Endothelial cell of umbilical vein (primary cell): ENCODE measurements at regions of chr10 and their contacts with region 1.

Region 1: DNA sequence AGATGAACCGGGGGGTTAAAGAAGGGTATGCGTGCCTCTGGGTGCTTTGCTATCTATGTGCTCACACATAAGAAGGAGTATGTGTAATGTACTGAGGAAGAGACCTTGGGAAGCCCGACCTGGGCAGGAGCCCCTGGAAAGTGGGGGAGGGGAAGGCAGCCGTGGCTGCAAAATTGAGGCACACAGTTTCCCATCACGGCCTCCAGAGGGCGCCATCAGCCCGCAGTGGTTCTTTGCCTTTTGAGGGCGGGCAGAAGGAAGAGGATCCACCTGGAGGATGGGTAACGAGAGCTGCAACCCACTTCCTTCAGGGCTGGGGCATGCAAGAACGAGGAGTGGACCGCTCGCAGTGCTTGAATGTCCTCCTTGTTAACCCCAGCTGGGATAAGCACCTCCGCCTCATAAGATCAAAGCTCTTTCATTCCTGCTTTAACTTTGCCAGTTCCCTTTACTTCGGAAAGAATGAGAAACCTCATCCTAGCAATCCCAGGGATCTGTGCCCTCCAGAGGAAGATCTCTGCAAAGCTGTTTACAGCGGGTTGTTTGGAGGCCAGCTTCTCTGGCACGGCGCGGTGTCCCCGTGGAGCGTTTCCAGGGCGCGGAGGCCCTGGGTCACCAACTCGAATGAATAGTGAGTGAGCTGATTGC is 77.9 kb downstream of the PCGF5 start:
- DNase-seq: peak; percentile 83
- H3K4me3 ChIP-seq: peak overlapping the region; percentile 16 to 63 (median 33)
- H3K27ac ChIP-seq: no peak overlapping the region
- H3K4me1 ChIP-seq: peaks cover 2% of the 10 kb centered on the region
- H3K27me3 ChIP-seq: no peaks in the 10 kb centered on the region
- CTCF ChIP-seq: peak; percentile 90 to 97
- POLR2A ChIP-seq: peak; percentile 25

Region 2: GRCh38 chr10:90885176-90885575 is 413.2 kb before region 1 on chr10:
- CTCF ChIA-PET with region 1: interaction called, 20 read pairs
- POLR2A ChIA-PET with region 1: no interaction called
- dilution Hi-C with region 1: no loop called
- intact Hi-C with region 1: loop called (anchors 1 kb)
- DNase-seq: no peak
- H3K4me3 ChIP-seq: no peak overlapping the region
- H3K27ac ChIP-seq: no peak overlapping the region
- H3K4me1 ChIP-seq: no peaks in the 10 kb centered on the region
- H3K27me3 ChIP-seq: no peaks in the 10 kb centered on the region
- CTCF ChIP-seq: no peak
- POLR2A ChIP-seq: no peak

Region 3: GRCh38 chr10:91311601-91312381 is 13.4 kb after region 1 on chr10:
- CTCF ChIA-PET with region 1: interaction called, 30 read pairs
- POLR2A ChIA-PET with region 1: no interaction called
- dilution Hi-C with region 1: no loop called
- intact Hi-C with region 1: no loop called
- DNase-seq: no peak
- H3K4me3 ChIP-seq: no peak overlapping the region
- H3K27ac ChIP-seq: no peak overlapping the region
- H3K4me1 ChIP-seq: no peaks in the 10 kb centered on the region
- H3K27me3 ChIP-seq: peaks cover 7 to 8% of the 10 kb centered on the region in 2 experiments
- CTCF ChIP-seq: no peak
- POLR2A ChIP-seq: no peak

Region 4: GRCh38 chr10:91367127-91367531 is 68.8 kb after region 1 on chr10:
- CTCF ChIA-PET with region 1: interaction called, 137 read pairs
- POLR2A ChIA-PET with region 1: no interaction called
- dilution Hi-C with region 1: no loop called
- intact Hi-C with region 1: loop called (anchors 1 kb)
- DNase-seq: no peak
- H3K4me3 ChIP-seq: no peak overlapping the region
- H3K27ac ChIP-seq: no peak overlapping the region
- H3K4me1 ChIP-seq: peaks cover 9% of the 10 kb centered on the region
- H3K27me3 ChIP-seq: no peaks in the 10 kb centered on the region
- CTCF ChIP-seq: no peak
- POLR2A ChIP-seq: no peak

Region 5: DNA sequence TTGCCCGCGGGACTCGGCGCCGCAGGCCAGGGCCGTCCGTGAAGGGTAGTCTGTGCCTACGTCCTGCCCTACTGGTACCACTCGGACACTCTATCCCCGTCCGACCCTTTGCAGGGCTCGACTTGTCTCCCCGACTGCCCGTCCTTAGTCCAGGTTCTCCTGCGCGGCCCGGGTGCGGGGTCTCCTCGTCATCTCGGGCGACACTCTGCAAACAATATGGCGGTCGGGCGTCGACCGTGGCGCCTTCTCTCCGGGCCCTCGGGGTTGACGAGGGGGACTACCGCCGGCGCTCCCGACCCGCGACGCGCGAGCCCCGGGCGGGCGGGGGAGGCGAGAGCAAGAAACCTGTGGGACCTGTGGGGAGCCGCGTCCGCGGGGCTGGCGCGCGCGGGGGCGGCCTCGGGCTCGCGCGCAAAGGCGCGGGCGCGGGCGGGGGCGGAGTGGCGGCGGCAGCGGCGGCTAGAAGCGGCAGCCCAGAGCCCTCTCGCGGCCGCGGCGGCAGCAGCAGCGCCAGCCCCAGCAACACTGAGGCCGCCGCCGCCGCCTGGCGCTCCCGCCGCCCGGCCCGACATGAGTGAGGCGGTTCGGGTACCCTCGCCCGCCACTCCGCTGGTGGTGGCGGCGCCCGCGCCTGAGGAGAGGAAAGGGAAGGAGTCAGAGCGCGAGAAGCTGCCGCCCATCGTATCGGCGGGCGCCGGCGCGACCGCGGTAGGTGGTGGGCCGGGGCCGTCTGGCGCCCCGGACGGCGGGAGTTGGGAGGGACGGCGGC is 111.7 kb after region 1 on chr10 and contains the start of gene HECTD2:
- CTCF ChIA-PET with region 1: interaction called, 18 read pairs
- POLR2A ChIA-PET with region 1: no interaction called
- dilution Hi-C with region 1: no loop called
- intact Hi-C with region 1: loop called (anchors 1 kb)
- DNase-seq: peak; percentile 72
- H3K4me3 ChIP-seq: peak within 1 kb of the TSS; percentile 54 to 86 (median 80)
- H3K27ac ChIP-seq: peak within 1 kb of the TSS; percentile 96
- H3K4me1 ChIP-seq: peaks cover 9% of the 10 kb centered on the region
- H3K27me3 ChIP-seq: no peaks in the 10 kb centered on the region
- CTCF ChIP-seq: peak; percentile 10 to 21
- POLR2A ChIP-seq: no peak
- total RNA-seq, gene HECTD2: 7.7 and 10.7 TPM in 2 replicates

Region 6: GRCh38 chr10:91694170-91694794 is 395.9 kb after region 1 on chr10:
- CTCF ChIA-PET with region 1: interaction called, 12 read pairs
- POLR2A ChIA-PET with region 1: no interaction called
- dilution Hi-C with region 1: no loop called
- intact Hi-C with region 1: loop called (anchors 1 kb)
- DNase-seq: peak; percentile 48
- H3K4me3 ChIP-seq: no peak overlapping the region
- H3K27ac ChIP-seq: no peak overlapping the region
- H3K4me1 ChIP-seq: no peaks in the 10 kb centered on the region
- H3K27me3 ChIP-seq: peaks cover 3 to 4% of the 10 kb centered on the region in 2 experiments
- CTCF ChIP-seq: peak; percentile 58 to 65
- POLR2A ChIP-seq: no peak